GM12878 (cell line): ENCODE measurements at regions of chr9 and their contacts with region 1.

Region 1: GRCh38 chr9:113657703-113658544 is 194.4 kb downstream of the RGS3 start:
- DNase-seq: peak; percentile 39
- ATAC-seq: peak; percentile 96
- H3K4me3 ChIP-seq: no peak overlapping the region
- H3K27ac ChIP-seq: no peak overlapping the region
- H3K4me1 ChIP-seq: no peaks in the 10 kb centered on the region
- H3K27me3 ChIP-seq: 0 out of 4 replicates have a peak, but pooled peaks cover 0 to 1% of the 10 kb centered on the region in 2 experiments
- CTCF ChIP-seq: peak; percentile 95 to 98 (median 96)
- EP300 ChIP-seq: no peak
- POLR2A ChIP-seq: no peak
- RAD21 ChIP-seq: peak; percentile 95

Region 2: GRCh38 chr9:113401027-113401792 is 256.7 kb before region 1 on chr9 and contains the start of gene ALAD:
- CTCF ChIA-PET with region 1: interaction called, 71 read pairs
- POLR2A ChIA-PET with region 1: no interaction called
- RAD21 ChIA-PET with region 1: interaction called, 11 read pairs
- SMC1A ChIA-PET with region 1: interaction called, 25 read pairs
- in situ Hi-C with region 1: no loop called
- intact Hi-C with region 1: loop called (anchors 2 kb)
- DNase-seq: peak; percentile 87
- ATAC-seq: peak; percentile 100
- H3K4me3 ChIP-seq: peak within 1 kb of the TSS; percentile 86
- H3K27ac ChIP-seq: no peak within 1 kb of the TSS
- H3K4me1 ChIP-seq: no peaks in the 10 kb centered on the region
- H3K27me3 ChIP-seq: no peaks in the 10 kb centered on the region
- CTCF ChIP-seq: peak; percentile 95 to 99 (median 96)
- EP300 ChIP-seq: no peak
- POLR2A ChIP-seq: peak; percentile 80
- RAD21 ChIP-seq: peak; percentile 68
- polyA plus RNA-seq, gene ALAD: 2.4 to 3.9 TPM

Region 3: GRCh38 chr9:113454914-113455761 is 202.8 kb before region 1 on chr9:
- CTCF ChIA-PET with region 1: interaction called, 384 read pairs
- POLR2A ChIA-PET with region 1: no interaction called
- RAD21 ChIA-PET with region 1: interaction called, 247 read pairs
- SMC1A ChIA-PET with region 1: interaction called, 245 read pairs
- in situ Hi-C with region 1: no loop called
- intact Hi-C with region 1: no loop called
- DNase-seq: no peak
- ATAC-seq: peak; percentile 71
- H3K4me3 ChIP-seq: no peak overlapping the region
- H3K27ac ChIP-seq: no peak overlapping the region
- H3K4me1 ChIP-seq: peaks cover 9% of the 10 kb centered on the region
- H3K27me3 ChIP-seq: no peaks in the 10 kb centered on the region
- CTCF ChIP-seq: no peak
- EP300 ChIP-seq: no peak
- POLR2A ChIP-seq: no peak
- RAD21 ChIP-seq: no peak

Region 4: DNA sequence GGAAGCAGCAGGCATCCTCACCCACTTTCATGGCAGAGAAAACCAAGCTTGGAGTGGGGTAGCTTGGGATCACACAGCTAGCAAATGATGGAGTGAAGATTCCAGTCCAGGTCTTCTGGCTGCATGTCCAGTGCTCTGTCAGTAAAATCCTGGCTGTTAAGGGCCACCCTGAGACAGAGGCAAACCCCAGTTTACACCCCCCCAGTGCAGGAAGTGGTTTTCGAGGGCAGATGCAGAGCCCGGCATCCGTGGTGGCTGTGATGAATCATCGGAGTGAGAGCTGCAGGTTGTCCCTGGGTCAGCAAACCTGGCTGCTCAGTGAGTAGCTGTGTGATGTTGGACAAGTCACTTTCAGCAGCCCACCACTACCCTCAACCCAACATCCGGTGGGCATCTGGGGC is 79.0 kb before region 1 on chr9:
- CTCF ChIA-PET with region 1: interaction called, 565 read pairs
- POLR2A ChIA-PET with region 1: interaction called, 3 read pairs
- RAD21 ChIA-PET with region 1: interaction called, 41 read pairs
- SMC1A ChIA-PET with region 1: interaction called, 37 read pairs
- in situ Hi-C with region 1: no loop called
- intact Hi-C with region 1: no loop called
- DNase-seq: peak; percentile 88
- ATAC-seq: peak; percentile 72
- H3K4me3 ChIP-seq: 0 out of 2 replicates have a peak overlapping the region, but pooled peaks have one; percentile 16
- H3K27ac ChIP-seq: peak overlapping the region; percentile 70
- H3K4me1 ChIP-seq: peaks cover 91% of the 10 kb centered on the region
- H3K27me3 ChIP-seq: no peaks in the 10 kb centered on the region
- CTCF ChIP-seq: no peak
- EP300 ChIP-seq: peak; percentile 80 to 85; a peak in 3 of 4 replicates
- POLR2A ChIP-seq: peak; percentile 60
- RAD21 ChIP-seq: no peak; the same call in 1 of the 2 replicates

Region 5: GRCh38 chr9:113608082-113608685 is 49.7 kb before region 1 on chr9:
- CTCF ChIA-PET with region 1: interaction called, 62 read pairs
- POLR2A ChIA-PET with region 1: no interaction called
- RAD21 ChIA-PET with region 1: interaction called, 22 read pairs
- SMC1A ChIA-PET with region 1: interaction called, 28 read pairs
- in situ Hi-C with region 1: no loop called
- intact Hi-C with region 1: no loop called
- DNase-seq: no peak
- ATAC-seq: no peak
- H3K4me3 ChIP-seq: no peak overlapping the region
- H3K27ac ChIP-seq: no peak overlapping the region
- H3K4me1 ChIP-seq: no peaks in the 10 kb centered on the region
- H3K27me3 ChIP-seq: no peaks in the 10 kb centered on the region
- CTCF ChIP-seq: no peak
- EP300 ChIP-seq: no peak
- POLR2A ChIP-seq: no peak
- RAD21 ChIP-seq: no peak